ENCODE measurements at regions of chr1 and their contacts with region 1.

Region 1: DNA sequence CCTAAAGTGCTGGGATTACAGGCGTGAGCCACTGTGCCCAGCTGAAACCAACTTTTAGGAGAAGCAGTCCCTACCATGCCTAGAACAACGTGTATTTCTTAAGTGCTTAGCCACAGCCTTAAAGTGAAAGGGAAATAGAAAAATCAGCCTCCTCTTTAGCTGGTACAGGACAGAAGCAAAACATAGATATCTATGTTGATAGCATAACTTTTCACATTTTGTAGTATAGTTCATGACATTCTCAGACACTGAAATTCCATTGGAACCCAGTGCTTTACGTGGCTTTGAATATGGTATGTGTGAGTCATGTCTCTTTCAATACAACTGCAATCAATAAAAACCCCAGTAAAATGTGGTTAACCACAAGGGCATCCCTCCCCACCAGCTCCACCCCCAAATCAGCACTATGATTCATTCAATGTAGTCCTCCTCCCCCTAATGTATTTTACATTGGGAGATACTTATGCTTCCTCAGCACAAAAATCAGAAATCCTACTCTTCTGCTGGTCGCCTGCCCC is 32.1 kb downstream of the TGFB2 start:
- DNase-seq: peak; percentile 16
- H3K4me3 Mint-ChIP-seq: no peak overlapping the region
- H3K27ac Mint-ChIP-seq: peak overlapping the region; percentile 65
- H3K4me1 Mint-ChIP-seq: peaks cover 12% of the 10 kb centered on the region
- H3K27me3 Mint-ChIP-seq: peaks cover 27% of the 10 kb centered on the region

Region 2: DNA sequence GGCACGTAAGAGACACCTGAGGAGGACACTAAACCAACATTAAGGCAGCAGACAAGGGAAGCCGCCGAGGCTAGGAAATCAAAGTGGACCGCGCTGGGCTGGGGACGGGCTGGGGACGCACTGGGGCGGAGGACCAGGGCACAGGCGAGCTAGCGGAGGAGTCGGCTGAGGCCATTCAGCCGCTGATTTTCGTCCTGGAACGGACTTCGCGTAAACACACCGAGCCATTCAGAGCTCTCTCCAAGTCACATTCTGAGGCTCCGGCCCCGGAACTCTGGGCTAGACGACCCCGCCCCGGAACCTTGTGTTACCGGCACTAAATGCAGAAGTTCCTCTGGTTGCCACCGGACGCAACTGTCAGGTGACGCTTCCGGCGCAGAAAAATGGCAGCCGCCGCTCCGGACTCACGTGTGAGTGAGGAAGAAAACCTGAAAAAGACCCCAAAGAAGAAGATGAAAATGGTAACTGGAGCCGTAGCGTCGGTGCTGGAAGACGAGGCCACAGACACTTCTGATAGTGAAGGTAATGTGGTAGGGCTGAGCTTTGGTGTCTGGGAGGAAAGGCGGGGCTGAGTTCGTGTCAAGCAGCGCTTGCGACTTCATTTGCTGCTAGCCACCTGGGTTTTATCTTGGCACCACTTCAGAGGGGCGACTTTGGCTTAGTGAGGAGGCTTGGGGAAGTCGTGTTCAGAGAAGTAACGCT is 92.1 kb before region 1 on chr1 and contains the start of gene RRP15:
- intact Hi-C with region 1: loop called (anchors 2 kb)
- DNase-seq: peak; percentile 82
- H3K4me3 Mint-ChIP-seq: peak within 1 kb of the TSS; percentile 95
- H3K27ac Mint-ChIP-seq: peak within 1 kb of the TSS; percentile 98
- H3K4me1 Mint-ChIP-seq: peaks cover 37% of the 10 kb centered on the region
- H3K27me3 Mint-ChIP-seq: peaks cover 6% of the 10 kb centered on the region
- total RNA-seq, gene RRP15: 42.2 and 50.1 TPM in 2 replicates

Region 3: GRCh38 chr1:218299416-218299815 is 77.8 kb before region 1 on chr1:
- intact Hi-C with region 1: no loop called
- DNase-seq: no peak
- H3K4me3 Mint-ChIP-seq: no peak overlapping the region
- H3K27ac Mint-ChIP-seq: no peak overlapping the region
- H3K4me1 Mint-ChIP-seq: peaks cover 5% of the 10 kb centered on the region
- H3K27me3 Mint-ChIP-seq: no peaks in the 10 kb centered on the region

Region 4: DNA sequence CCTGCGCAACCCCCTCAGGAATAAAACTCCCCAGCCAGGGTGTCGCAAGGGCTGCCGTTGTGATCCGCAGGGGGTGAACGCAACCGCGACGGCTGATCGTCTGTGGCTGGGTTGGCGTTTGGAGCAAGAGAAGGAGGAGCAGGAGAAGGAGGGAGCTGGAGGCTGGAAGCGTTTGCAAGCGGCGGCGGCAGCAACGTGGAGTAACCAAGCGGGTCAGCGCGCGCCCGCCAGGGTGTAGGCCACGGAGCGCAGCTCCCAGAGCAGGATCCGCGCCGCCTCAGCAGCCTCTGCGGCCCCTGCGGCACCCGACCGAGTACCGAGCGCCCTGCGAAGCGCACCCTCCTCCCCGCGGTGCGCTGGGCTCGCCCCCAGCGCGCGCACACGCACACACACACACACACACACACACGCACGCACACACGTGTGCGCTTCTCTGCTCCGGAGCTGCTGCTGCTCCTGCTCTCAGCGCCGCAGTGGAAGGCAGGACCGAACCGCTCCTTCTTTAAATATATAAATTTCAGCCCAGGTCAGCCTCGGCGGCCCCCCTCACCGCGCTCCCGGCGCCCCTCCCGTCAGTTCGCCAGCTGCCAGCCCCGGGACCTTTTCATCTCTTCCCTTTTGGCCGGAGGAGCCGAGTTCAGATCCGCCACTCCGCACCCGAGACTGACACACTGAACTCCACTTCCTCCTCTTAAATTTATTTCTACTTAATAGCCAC is 31.4 kb before region 1 on chr1:
- intact Hi-C with region 1: loop called (anchors 1 kb)
- DNase-seq: no peak
- H3K4me3 Mint-ChIP-seq: peak overlapping the region; percentile 78
- H3K27ac Mint-ChIP-seq: no peak overlapping the region
- H3K4me1 Mint-ChIP-seq: peaks cover 21% of the 10 kb centered on the region
- H3K27me3 Mint-ChIP-seq: peaks cover 59% of the 10 kb centered on the region

Region 5: GRCh38 chr1:218351391-218352074 is 25.7 kb before region 1 on chr1:
- intact Hi-C with region 1: loop called (anchors 1 kb)
- DNase-seq: no peak
- H3K4me3 Mint-ChIP-seq: peak overlapping the region; percentile 37
- H3K27ac Mint-ChIP-seq: no peak overlapping the region
- H3K4me1 Mint-ChIP-seq: peaks cover 22% of the 10 kb centered on the region
- H3K27me3 Mint-ChIP-seq: peaks cover 53% of the 10 kb centered on the region